HCT116 (cell line): ENCODE measurements at regions of chr12 and their contacts with region 1.

Region 1: DNA sequence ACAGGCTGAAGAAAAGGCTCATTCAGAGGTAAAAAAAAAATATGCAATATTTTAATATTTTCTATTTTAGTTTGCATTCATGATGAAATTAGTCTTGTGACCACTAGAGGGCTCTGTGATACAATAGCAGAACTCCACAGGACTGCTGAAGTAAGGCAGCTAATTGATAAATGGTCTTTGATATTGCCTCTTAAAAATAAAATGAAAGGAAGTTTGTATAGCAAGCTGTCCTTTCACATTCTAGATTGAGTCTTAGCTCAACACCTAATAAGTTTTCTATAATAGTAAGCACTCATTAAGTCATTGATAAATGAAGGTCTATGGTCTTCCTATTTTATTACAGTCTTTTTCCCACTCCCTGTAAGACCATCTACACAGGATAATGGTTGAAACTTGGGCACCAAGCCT is 315.7 kb downstream of the NAV3 start:
- DNase-seq: peak; percentile 27
- ATAC-seq: peak; percentile 63; the same call in 1 of the 2 replicates
- H3K4me3 ChIP-seq: no peak overlapping the region
- H3K27ac ChIP-seq: no peak overlapping the region
- H3K4me1 ChIP-seq: no peaks in the 10 kb centered on the region
- H3K27me3 ChIP-seq: no peaks in the 10 kb centered on the region
- CTCF ChIP-seq: peak; percentile 45 to 72 (median 60); a peak in 5 of 6 replicates
- POLR2A ChIP-seq: no peak
- RAD21 ChIP-seq: peak; percentile 67

Region 2: DNA sequence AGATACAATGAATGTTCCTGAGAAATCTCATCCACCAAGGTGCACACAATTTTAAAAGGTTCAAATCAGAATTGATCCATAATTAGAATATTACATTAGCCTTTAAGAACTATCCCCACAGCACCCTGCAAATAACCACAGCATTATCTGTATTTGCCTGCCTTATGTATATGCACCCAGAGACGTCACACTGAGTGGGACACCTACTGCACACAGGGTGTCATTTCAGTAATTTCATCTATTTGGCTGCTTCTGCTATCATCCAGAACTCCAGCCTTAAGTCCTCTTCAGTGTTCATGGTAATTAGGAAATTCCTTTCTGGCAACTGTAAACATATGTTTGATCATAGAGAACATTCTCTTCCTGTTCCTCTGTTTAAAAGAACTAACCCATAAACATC is 1016.6 kb after region 1 on chr12:
- CTCF ChIA-PET with region 1: no interaction called
- POLR2A ChIA-PET with region 1: no interaction called
- RAD21 ChIA-PET with region 1: no interaction called
- intact Hi-C with region 1: loop called (anchors 10 kb)
- DNase-seq: no peak
- ATAC-seq: no peak
- H3K4me3 ChIP-seq: no peak overlapping the region
- H3K27ac ChIP-seq: no peak overlapping the region
- H3K4me1 ChIP-seq: no peaks in the 10 kb centered on the region
- H3K27me3 ChIP-seq: no peaks in the 10 kb centered on the region
- CTCF ChIP-seq: no peak
- POLR2A ChIP-seq: no peak
- RAD21 ChIP-seq: 0 out of 2 replicates have a peak, but pooled peaks have one; percentile 6